T-cell (primary cell): ENCODE measurements at regions of chr14 and their contacts with region 1.

Region 1: GRCh38 chr14:75499084-75499875 is 23.0 kb upstream of the BATF start:
- DNase-seq: no peak
- ATAC-seq: no peak
- H3K4me3 ChIP-seq: no peak overlapping the region
- H3K4me3 Mint-ChIP-seq: no peak overlapping the region
- H3K27ac ChIP-seq: no peak overlapping the region
- H3K27ac Mint-ChIP-seq: peak overlapping the region; percentile 16 to 66
- H3K4me1 ChIP-seq: peaks cover 0 to 24% of the 10 kb centered on the region in 2 experiments
- H3K4me1 Mint-ChIP-seq: peaks cover 7 to 11% (median 11%) of the 10 kb centered on the region in 3 donors
- H3K27me3 ChIP-seq: no peaks in the 10 kb centered on the region
- H3K27me3 Mint-ChIP-seq: no peaks in the 10 kb centered on the region

Region 2: DNA sequence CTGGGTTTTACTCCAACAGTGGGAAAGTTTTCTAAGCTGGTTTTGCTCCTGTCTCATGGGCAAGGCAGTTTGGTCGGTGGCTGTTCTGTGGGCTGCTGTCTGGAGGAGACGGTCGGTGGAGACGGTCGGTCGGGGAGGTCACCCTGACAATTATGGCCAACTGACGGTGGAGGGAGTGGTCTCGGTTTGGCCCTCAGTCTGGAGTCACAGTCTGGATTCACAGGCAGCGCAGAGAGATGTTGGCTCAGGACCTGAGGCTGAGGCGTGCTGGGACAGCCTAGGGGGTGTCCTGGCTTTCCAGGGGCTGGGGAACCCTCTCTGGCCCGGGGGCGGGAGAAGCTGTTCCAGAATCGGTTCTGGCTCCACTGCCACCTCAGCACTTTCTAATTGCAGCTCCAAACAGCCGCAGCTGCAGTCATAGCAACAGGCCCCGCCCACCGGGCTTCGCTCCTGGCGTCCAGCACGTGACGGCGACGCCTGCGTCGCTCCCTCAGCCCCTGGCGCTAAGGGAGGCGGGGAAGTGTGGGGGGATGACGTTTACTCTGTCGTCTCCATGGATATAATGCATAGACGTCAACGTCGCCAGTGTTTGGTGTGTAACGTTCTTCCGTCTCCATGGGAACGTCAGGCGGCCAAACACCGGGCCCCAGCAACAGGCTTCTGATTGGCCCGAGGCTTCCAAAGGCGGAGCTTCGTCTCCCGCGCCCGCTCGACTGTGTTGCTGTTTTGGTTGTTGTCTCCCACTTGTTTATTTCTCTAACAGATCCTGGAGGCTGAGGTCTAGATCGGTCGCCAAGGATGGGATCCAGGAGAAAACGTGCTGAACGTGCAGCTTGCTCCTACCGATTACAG is 240.4 kb before region 1 on chr14:
- CTCF ChIA-PET with region 1: no interaction called
- POLR2A ChIA-PET with region 1: no interaction called
- DNase-seq: peak; percentile 92 to 100 (median 100)
- ATAC-seq: peak; percentile 91 to 98 (median 96)
- H3K4me3 ChIP-seq: peak overlapping the region; percentile 38 to 47
- H3K4me3 Mint-ChIP-seq: peak overlapping the region; percentile 85 to 87 (median 87)
- H3K27ac ChIP-seq: peak overlapping the region; percentile 95
- H3K27ac Mint-ChIP-seq: peak overlapping the region; percentile 98 to 100
- H3K4me1 ChIP-seq: peaks cover 9 to 23% of the 10 kb centered on the region in 2 experiments
- H3K4me1 Mint-ChIP-seq: peaks cover 29 to 45% (median 38%) of the 10 kb centered on the region in 3 donors
- H3K27me3 ChIP-seq: peaks cover 0 to 8% of the 10 kb centered on the region in 2 experiments
- H3K27me3 Mint-ChIP-seq: no peaks in the 10 kb centered on the region

Region 3: GRCh38 chr14:75437201-75438143 is 61.8 kb before region 1 on chr14:
- CTCF ChIA-PET with region 1: interaction called in 1 of 2 experiments, 9 read pairs
- POLR2A ChIA-PET with region 1: interaction called in 1 of 2 experiments, 14 read pairs
- DNase-seq: no peak
- ATAC-seq: no peak
- H3K4me3 ChIP-seq: no peak overlapping the region
- H3K4me3 Mint-ChIP-seq: no peak overlapping the region
- H3K27ac ChIP-seq: no peak overlapping the region
- H3K27ac Mint-ChIP-seq: no peak overlapping the region
- H3K4me1 ChIP-seq: peaks cover 6 to 14% of the 10 kb centered on the region in 2 experiments
- H3K4me1 Mint-ChIP-seq: peaks cover 5 to 14% (median 10%) of the 10 kb centered on the region in 3 donors
- H3K27me3 ChIP-seq: peaks cover 0 to 17% of the 10 kb centered on the region in 2 experiments
- H3K27me3 Mint-ChIP-seq: peaks cover 0 to 3% of the 10 kb centered on the region in 2 donors